ENCODE measurements at regions of chr1 and their contacts with region 1.

Region 1: DNA sequence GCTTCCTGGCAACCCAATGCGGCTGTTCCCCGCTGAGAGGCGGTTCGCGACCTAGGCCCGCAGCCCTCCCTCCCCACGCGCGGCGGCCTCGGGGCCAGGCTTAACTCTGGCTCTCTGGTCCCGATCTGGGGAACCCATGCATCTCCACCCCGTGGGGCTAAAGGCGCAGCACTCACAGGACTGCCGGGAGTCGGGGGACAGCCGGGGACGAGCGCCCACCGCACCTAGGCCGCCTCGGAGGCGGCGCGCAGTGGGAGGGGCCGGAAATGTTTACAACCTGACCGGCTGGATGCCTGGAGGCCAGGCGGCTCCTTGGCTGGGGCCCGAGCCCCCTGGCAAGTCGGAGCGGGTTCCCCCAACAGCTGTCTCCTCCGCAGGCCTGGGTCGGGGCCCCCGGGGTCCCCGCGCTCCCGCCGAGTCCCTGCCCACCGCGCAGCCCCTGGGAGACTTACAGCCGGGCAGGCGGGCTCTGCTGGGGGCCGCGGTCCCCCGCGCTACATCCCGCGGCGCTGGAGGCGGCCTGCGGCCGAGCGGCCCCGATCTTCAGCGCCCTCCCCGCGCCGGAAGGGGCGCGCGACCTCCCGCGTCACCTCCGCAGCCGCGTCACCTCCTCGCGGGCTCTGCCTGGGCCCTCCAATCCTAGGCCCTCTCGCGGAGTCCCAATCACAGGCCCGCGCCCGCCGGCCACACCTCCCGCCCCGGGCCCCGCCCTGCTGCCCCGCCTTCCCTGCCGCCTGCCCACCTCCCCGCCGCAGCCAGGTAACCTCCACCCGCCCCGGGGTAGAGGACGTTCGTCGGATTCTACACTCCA is at the start of gene ADIPOR1:
- DNase-seq: peak; percentile 96 to 99 (median 98)
- ATAC-seq: peak; percentile 97
- H3K4me3 ChIP-seq: peak within 1 kb of the TSS; percentile 97
- H3K27ac ChIP-seq: peak within 1 kb of the TSS; percentile 90
- H3K4me1 ChIP-seq: peaks cover 15 to 34% of the 10 kb centered on the region in 2 experiments
- H3K27me3 ChIP-seq: no peaks in the 10 kb centered on the region
- CTCF ChIP-seq: peak in 2 of 3 experiments; percentile 3 to 21; a peak in 1 of 6 replicates
- EP300 ChIP-seq: no peak
- POLR2A ChIP-seq: peak; percentile 87
- RAD21 ChIP-seq: peak in 1 of 2 experiments; percentile 0; a peak in 1 of 4 replicates
- polyA plus RNA-seq, gene ADIPOR1: 29.0 to 33.4 TPM

Region 2: GRCh38 chr1:201530741-201531531 is 1427.0 kb before region 1 on chr1:
- CTCF ChIA-PET with region 1: no interaction called
- POLR2A ChIA-PET with region 1: no interaction called
- in situ Hi-C with region 1: no loop called
- intact Hi-C with region 1: no loop called
- DNase-seq: peak; percentile 76 to 88 (median 82)
- ATAC-seq: peak; percentile 98
- H3K4me3 ChIP-seq: no peak overlapping the region
- H3K27ac ChIP-seq: no peak overlapping the region
- H3K4me1 ChIP-seq: peaks cover 6 to 14% of the 10 kb centered on the region in 2 experiments
- H3K27me3 ChIP-seq: peaks cover 0 to 13% of the 10 kb centered on the region in 2 experiments; a peak in 3 of 5 replicates
- CTCF ChIP-seq: peak; percentile 95 to 98 (median 98)
- EP300 ChIP-seq: peak; percentile 41
- POLR2A ChIP-seq: no peak
- RAD21 ChIP-seq: peak; percentile 97 to 98

Region 3: GRCh38 chr1:202085682-202086404 is 872.1 kb before region 1 on chr1:
- CTCF ChIA-PET with region 1: no interaction called
- POLR2A ChIA-PET with region 1: no interaction called
- in situ Hi-C with region 1: no loop called
- intact Hi-C with region 1: no loop called
- DNase-seq: peak in 2 of 4 experiments; percentile 7 to 9
- ATAC-seq: peak; percentile 44
- H3K4me3 ChIP-seq: no peak overlapping the region
- H3K27ac ChIP-seq: no peak overlapping the region
- H3K4me1 ChIP-seq: peaks cover 0 to 12% of the 10 kb centered on the region in 2 experiments; a peak in 1 of 5 replicates
- H3K27me3 ChIP-seq: peaks cover 6 to 30% of the 10 kb centered on the region in 2 experiments; a peak in 4 of 5 replicates
- CTCF ChIP-seq: no peak
- EP300 ChIP-seq: no peak
- POLR2A ChIP-seq: no peak
- RAD21 ChIP-seq: no peak

Region 4: GRCh38 chr1:202661123-202661845 is 296.7 kb before region 1 on chr1:
- CTCF ChIA-PET with region 1: no interaction called
- POLR2A ChIA-PET with region 1: no interaction called
- in situ Hi-C with region 1: no loop called
- intact Hi-C with region 1: no loop called
- DNase-seq: no peak
- ATAC-seq: no peak
- H3K4me3 ChIP-seq: no peak overlapping the region
- H3K27ac ChIP-seq: no peak overlapping the region
- H3K4me1 ChIP-seq: no peaks in the 10 kb centered on the region
- H3K27me3 ChIP-seq: peaks cover 41 to 81% of the 10 kb centered on the region in 2 experiments
- CTCF ChIP-seq: 0 out of 6 replicates have a peak, but pooled peaks of 1 of the 3 experiments have one; percentile 10
- EP300 ChIP-seq: no peak
- POLR2A ChIP-seq: no peak
- RAD21 ChIP-seq: no peak

Region 5: DNA sequence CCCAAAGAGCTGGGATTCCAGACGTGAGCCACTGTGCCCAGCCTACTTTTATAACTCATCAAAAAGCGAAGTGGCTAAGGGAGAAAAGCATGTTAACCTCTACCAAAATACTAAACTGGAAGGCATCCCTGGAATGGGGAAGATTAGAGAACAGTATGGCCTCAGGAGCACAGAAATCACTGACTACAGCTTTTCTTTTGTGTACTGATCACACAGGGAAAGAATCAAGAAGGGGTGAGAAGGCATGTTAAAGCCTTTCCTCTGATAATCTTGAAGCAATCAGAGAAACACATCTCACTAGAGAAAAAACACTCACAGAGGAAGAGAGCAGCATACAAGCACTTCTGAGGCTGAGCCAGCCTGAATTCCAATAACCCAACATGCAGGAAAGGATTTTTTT is 136.5 kb before region 1 on chr1:
- CTCF ChIA-PET with region 1: no interaction called
- POLR2A ChIA-PET with region 1: no interaction called
- in situ Hi-C with region 1: no loop called
- intact Hi-C with region 1: no loop called
- DNase-seq: no peak
- ATAC-seq: no peak
- H3K4me3 ChIP-seq: no peak overlapping the region
- H3K27ac ChIP-seq: no peak overlapping the region
- H3K4me1 ChIP-seq: peaks cover 6 to 14% of the 10 kb centered on the region in 2 experiments; a peak in 4 of 5 replicates
- H3K27me3 ChIP-seq: peaks cover 35 to 47% of the 10 kb centered on the region in 2 experiments
- CTCF ChIP-seq: no peak
- EP300 ChIP-seq: no peak
- POLR2A ChIP-seq: no peak
- RAD21 ChIP-seq: no peak

Region 6: DNA sequence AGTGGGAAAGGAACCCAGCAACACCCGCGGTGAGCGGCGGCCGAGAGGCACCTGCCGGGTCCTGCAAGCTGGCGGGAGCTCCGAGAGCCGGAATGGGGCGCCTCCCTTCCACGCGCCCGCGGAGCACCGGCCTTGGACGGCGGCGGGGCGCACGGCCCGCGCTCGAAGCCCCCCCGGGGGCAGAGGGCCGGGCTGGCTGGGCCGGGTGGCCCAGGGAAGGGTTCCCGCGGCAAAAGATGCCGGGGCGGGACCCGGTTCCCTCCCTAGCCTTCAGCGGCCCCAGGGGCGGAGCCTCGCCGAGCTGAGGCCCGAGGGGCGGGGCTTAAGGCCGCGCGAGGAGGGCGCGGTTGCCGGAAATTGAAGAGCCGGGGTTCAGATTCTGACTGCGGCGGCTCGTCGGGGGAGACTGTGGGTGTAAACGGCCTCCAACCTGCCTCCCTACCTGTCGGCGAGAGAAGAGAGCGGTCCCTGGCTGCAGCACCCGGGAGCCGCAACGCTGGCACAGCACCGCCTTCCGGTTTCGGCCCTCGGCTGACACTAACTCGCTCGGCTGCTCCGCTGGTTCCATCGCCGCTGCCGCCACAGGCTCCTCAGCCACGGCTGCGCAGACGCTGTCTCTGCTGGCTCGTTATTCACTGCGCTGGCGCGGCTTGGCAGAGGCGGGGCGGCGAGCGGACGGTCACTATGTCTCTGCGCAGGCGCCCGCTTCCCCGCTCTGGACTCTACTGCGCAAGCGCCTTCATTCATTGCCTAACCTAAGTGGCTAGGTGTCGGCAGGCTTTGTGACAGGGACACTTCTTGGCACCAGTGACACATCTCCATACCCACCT is 69.2 kb before region 1 on chr1 and contains the start of gene RABIF:
- CTCF ChIA-PET with region 1: no interaction called
- POLR2A ChIA-PET with region 1: interaction called, 3 read pairs
- in situ Hi-C with region 1: no loop called
- intact Hi-C with region 1: loop called (anchors 5 kb)
- DNase-seq: peak; percentile 98 to 99 (median 99)
- ATAC-seq: peak; percentile 96
- H3K4me3 ChIP-seq: peak within 1 kb of the TSS; percentile 63
- H3K27ac ChIP-seq: peak within 1 kb of the TSS; percentile 83
- H3K4me1 ChIP-seq: peaks cover 10 to 24% of the 10 kb centered on the region in 2 experiments
- H3K27me3 ChIP-seq: no peaks in the 10 kb centered on the region
- CTCF ChIP-seq: peak; percentile 17 to 48 (median 24); a peak in 3 of 6 replicates
- EP300 ChIP-seq: no peak
- POLR2A ChIP-seq: peak; percentile 99
- RAD21 ChIP-seq: no peak
- polyA plus RNA-seq, gene RABIF: 8.7 to 10.1 TPM

Measured in K562 (cell line).